ENCODE measurements at regions of chr1 and their contacts with region 1.

Region 1: DNA sequence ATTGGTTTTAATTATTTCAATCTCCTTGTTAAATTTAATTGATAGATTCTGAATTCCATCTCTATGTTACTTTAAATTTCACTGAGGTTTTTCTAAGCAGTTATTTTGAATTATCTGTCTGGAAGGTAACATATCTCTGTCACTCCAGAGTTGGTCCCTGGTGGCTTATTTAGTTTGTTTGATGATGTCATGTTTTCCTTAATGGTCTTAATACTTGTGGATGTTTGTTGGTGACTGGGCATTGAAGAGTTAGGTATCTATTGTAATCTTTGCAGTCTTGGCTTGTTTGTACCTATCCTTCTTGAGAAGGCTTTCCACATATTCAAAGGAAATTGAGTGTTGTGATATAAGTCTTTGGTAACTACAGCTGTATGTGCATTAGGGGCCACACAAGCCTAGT is 810.0 kb upstream of the NEGR1 start:
- DNase-seq: no peak
- H3K4me3 ChIP-seq: no peak overlapping the region
- H3K27ac ChIP-seq: no peak overlapping the region
- H3K4me1 ChIP-seq: no peaks in the 10 kb centered on the region
- H3K27me3 ChIP-seq: no peaks in the 10 kb centered on the region
- CTCF ChIP-seq: no peak

Region 2: GRCh38 chr1:73104749-73105148 is 12.4 kb after region 1 on chr1:
- CTCF ChIA-PET with region 1: no interaction called
- POLR2A ChIA-PET with region 1: no interaction called
- intact Hi-C with region 1: loop called (anchors 1 kb)
- DNase-seq: no peak
- H3K4me3 ChIP-seq: no peak overlapping the region
- H3K27ac ChIP-seq: no peak overlapping the region
- H3K4me1 ChIP-seq: no peaks in the 10 kb centered on the region
- H3K27me3 ChIP-seq: no peaks in the 10 kb centered on the region
- CTCF ChIP-seq: no peak